HCT116 (cell line): ENCODE measurements at regions of chr15 and their contacts with region 1.

Region 1: GRCh38 chr15:50145451-50145872 is 26.4 kb upstream of the ATP8B4 start:
- DNase-seq: peak; percentile 71
- ATAC-seq: peak; percentile 81
- H3K4me3 ChIP-seq: no peak overlapping the region
- H3K27ac ChIP-seq: no peak overlapping the region
- H3K4me1 ChIP-seq: peaks cover 2 to 23% of the 10 kb centered on the region in 2 experiments; a peak in 3 of 4 replicates
- H3K27me3 ChIP-seq: no peaks in the 10 kb centered on the region
- CTCF ChIP-seq: peak; percentile 17 to 61 (median 51); a peak in 3 of 6 replicates
- POLR2A ChIP-seq: no peak
- RAD21 ChIP-seq: peak; percentile 75

Region 2: DNA sequence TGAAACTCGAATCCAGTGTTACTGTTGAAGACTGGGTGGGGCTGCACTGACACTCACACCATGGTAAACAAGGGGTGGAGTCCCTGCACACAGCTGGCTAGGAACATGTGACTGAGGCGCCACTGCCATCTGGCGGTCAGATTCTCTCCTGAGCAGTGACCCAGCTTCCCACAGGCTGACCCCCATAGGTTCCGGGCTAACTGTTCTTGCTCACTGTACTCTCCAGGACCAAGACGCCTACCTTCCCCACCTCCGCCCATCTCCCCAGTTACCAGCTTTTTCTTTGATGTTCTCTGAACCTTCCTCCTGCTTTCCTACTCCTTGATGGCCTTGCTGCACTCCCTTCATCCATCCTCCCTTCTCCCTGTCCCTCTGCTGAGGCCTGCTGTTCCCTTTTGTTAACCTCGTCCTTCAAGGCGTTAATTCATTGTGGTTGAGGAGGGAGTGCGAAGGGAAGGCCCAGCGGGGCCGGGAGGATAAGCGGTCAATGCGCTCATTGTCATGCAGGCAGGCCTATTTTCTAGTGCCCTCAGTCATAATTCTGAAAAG is 141.6 kb before region 1 on chr15:
- CTCF ChIA-PET with region 1: interaction called, 7 read pairs
- POLR2A ChIA-PET with region 1: no interaction called
- RAD21 ChIA-PET with region 1: no interaction called
- intact Hi-C with region 1: loop called (anchors 10 kb)
- DNase-seq: peak; percentile 80
- ATAC-seq: peak; percentile 100
- H3K4me3 ChIP-seq: no peak overlapping the region
- H3K27ac ChIP-seq: no peak overlapping the region
- H3K4me1 ChIP-seq: peaks cover 2 to 5% of the 10 kb centered on the region in 2 experiments; a peak in 3 of 4 replicates
- H3K27me3 ChIP-seq: no peaks in the 10 kb centered on the region
- CTCF ChIP-seq: peak; percentile 38 to 89 (median 84); a peak in 5 of 6 replicates
- POLR2A ChIP-seq: no peak
- RAD21 ChIP-seq: peak; percentile 77

Region 3: DNA sequence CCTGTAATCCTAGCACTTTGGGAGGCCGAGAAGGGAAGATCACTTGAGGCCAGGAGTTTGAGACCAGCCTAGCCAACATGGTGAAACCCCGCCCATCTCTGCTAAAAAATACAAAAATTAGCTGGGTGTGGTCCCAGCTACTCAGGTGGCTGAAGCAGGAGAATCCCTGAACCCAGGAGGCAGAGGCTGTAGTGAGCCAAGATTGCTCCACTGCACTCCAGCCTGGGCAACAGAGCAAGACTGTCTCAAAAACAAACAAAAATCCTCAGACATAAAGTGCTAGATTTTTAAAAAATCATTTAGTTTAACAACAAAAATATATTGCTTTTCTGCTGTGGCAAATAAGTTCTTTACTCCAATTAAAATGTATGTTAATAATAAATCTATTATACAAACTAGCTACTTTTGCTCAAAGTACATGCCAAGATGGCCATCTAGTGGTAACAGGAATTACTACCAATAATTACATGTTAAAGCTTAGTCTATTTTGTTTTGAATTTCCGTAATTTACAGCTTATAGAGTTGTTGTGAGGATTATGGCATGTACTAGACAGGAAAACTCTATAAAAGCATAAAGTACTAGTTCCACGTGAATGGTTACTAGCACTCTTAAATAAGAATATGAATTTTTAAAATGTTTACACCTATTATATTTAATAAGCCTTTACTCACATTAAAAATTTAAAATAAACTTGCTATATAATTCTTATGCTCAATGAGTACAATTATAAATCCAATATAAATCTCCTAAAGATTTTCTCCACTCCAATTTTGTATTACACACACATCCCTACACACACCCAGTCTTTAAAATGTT is 170.6 kb after region 1 on chr15:
- CTCF ChIA-PET with region 1: interaction called, 116 read pairs
- POLR2A ChIA-PET with region 1: interaction called, 4 read pairs
- RAD21 ChIA-PET with region 1: interaction called, 8 to 9 read pairs
- intact Hi-C with region 1: loop called (anchors 1 kb)
- DNase-seq: peak; percentile 31
- ATAC-seq: peak; percentile 62
- H3K4me3 ChIP-seq: no peak overlapping the region
- H3K27ac ChIP-seq: no peak overlapping the region
- H3K4me1 ChIP-seq: no peaks in the 10 kb centered on the region; a peak in 1 of 4 replicates
- H3K27me3 ChIP-seq: no peaks in the 10 kb centered on the region
- CTCF ChIP-seq: peak; percentile 57 to 75 (median 58); a peak in 5 of 6 replicates
- POLR2A ChIP-seq: no peak
- RAD21 ChIP-seq: peak; percentile 74

Region 4: DNA sequence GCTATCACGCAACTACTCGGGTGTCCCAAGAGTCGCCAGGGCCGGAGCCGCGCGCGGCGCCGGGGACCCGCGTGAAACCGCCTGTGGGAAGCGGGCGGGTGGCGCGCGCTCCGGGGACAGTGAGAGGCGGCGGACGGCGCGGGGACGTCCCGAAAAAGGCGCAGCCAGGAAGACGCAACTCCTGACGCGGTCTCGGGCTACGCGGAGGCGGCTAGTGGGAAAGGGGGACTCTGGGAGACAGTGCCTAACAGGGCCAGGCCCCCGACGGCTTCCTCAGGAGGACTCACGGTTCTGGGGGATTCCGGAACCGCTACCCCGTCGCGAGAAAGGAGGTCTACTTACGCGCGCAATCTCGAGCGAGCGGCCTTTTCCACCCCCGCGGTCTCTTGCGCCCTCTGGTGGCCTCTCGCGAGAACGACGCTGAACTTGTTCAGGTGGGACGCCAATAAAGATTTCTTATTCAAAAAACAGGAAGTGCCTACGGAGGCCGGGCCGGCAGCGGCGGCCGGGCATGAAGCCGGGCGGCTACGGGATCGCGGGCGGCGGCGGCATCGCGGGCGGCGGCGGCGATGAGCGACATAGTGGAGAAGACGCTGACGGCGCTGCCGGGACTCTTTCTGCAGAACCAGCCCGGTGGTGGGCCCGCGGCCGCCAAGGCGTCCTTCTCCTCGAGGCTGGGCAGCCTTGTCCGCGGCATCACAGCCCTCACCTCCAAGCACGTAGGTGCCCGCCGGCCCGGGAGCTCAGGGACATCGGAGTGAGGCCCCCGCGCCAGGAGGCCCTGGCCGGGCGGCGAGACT is 762.9 kb after region 1 on chr15 and contains the start of gene AP4E1:
- CTCF ChIA-PET with region 1: no interaction called
- POLR2A ChIA-PET with region 1: no interaction called
- RAD21 ChIA-PET with region 1: no interaction called
- intact Hi-C with region 1: loop called (anchors 1 kb)
- DNase-seq: peak; percentile 87
- ATAC-seq: peak; percentile 82
- H3K4me3 ChIP-seq: peak within 1 kb of the TSS; percentile 94
- H3K27ac ChIP-seq: peak within 1 kb of the TSS; percentile 88
- H3K4me1 ChIP-seq: peaks cover 10 to 21% of the 10 kb centered on the region in 2 experiments; a peak in 3 of 4 replicates
- H3K27me3 ChIP-seq: no peaks in the 10 kb centered on the region
- CTCF ChIP-seq: peak; percentile 65 to 84 (median 79); a peak in 5 of 6 replicates
- POLR2A ChIP-seq: peak; percentile 50
- RAD21 ChIP-seq: peak; percentile 91
- total RNA-seq, gene AP4E1: 10.1 TPM